ENCODE measurements at regions of chr3 and their contacts with region 1.

Region 1: GRCh38 chr3:157618075-157618760 is 115.0 kb upstream of the VEPH1 start:
- DNase-seq: peak; percentile 18
- H3K4me3 ChIP-seq: no peak overlapping the region
- H3K27ac ChIP-seq: no peak overlapping the region
- H3K27me3 ChIP-seq: peaks cover 8% of the 10 kb centered on the region
- CTCF ChIP-seq: peak; percentile 68

Region 2: GRCh38 chr3:157542711-157543500 is 75.3 kb before region 1 on chr3:
- CTCF ChIA-PET with region 1: interaction called, 12 read pairs
- POLR2A ChIA-PET with region 1: no interaction called
- DNase-seq: peak; percentile 36
- H3K4me3 ChIP-seq: peak overlapping the region; percentile 60
- H3K27ac ChIP-seq: peak overlapping the region; percentile 21
- H3K27me3 ChIP-seq: no peaks in the 10 kb centered on the region
- CTCF ChIP-seq: peak; percentile 38

Region 3: GRCh38 chr3:157582637-157582973 is 35.6 kb before region 1 on chr3:
- CTCF ChIA-PET with region 1: no interaction called
- POLR2A ChIA-PET with region 1: no interaction called
- DNase-seq: no peak
- H3K4me3 ChIP-seq: no peak overlapping the region
- H3K27ac ChIP-seq: no peak overlapping the region
- H3K27me3 ChIP-seq: no peaks in the 10 kb centered on the region
- CTCF ChIP-seq: no peak

Region 4: DNA sequence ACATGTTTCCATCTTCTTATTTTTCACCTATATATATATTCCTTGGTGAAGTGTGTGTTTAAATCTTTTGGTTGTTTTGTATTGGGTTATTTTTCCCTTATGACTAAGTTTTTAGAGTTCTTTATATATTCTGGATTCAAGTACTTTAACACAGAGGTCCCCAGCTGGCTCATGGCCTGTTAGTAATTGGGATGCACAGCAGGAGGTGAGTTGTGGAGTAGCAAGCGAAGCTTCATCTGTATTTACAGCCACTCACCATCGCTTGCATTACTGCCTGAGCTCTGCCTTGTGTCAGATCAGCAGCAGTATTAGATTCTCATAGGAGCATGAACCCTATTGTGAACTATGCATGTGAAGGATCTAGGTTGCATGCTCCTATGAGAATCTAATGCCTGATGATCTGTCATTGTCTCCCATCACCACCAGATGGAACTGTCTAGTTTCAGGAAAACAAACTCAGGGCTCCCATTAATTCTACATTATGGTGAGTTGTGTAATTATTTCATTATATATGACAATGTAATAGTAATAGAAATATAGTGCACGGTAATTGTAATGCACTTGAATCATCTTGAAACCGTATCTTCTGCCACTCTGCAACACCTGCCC is 643.3 kb after region 1 on chr3:
- CTCF ChIA-PET with region 1: no interaction called
- POLR2A ChIA-PET with region 1: no interaction called
- DNase-seq: no peak
- H3K4me3 ChIP-seq: no peak overlapping the region
- H3K27ac ChIP-seq: no peak overlapping the region
- H3K27me3 ChIP-seq: no peaks in the 10 kb centered on the region
- CTCF ChIP-seq: no peak

Region 5: GRCh38 chr3:158532099-158532734 is 914.0 kb after region 1 on chr3:
- CTCF ChIA-PET with region 1: interaction called, 19 read pairs
- POLR2A ChIA-PET with region 1: no interaction called
- DNase-seq: peak; percentile 23
- H3K4me3 ChIP-seq: no peak overlapping the region
- H3K27ac ChIP-seq: no peak overlapping the region
- H3K27me3 ChIP-seq: no peaks in the 10 kb centered on the region
- CTCF ChIP-seq: peak; percentile 66